ENCODE measurements at regions of chr1 and their contacts with region 1.

Region 1: GRCh38 chr1:212683357-212683722 is 16.3 kb downstream of the BATF3 start:
- DNase-seq: peak; percentile 82
- ATAC-seq: peak; percentile 37
- H3K4me3 Mint-ChIP-seq: peak overlapping the region; percentile 39
- H3K27ac Mint-ChIP-seq: peak overlapping the region; percentile 83
- H3K4me1 Mint-ChIP-seq: peaks cover 50% of the 10 kb centered on the region
- H3K27me3 Mint-ChIP-seq: no peaks in the 10 kb centered on the region

Region 2: GRCh38 chr1:212721388-212722247 is 38.3 kb after region 1 on chr1:
- CTCF ChIA-PET with region 1: interaction called, 3 read pairs
- POLR2A ChIA-PET with region 1: interaction called, 12 read pairs
- intact Hi-C with region 1: no loop called
- DNase-seq: peak; percentile 66
- ATAC-seq: peak; percentile 82
- H3K4me3 Mint-ChIP-seq: peak overlapping the region; percentile 48
- H3K27ac Mint-ChIP-seq: peak overlapping the region; percentile 68
- H3K4me1 Mint-ChIP-seq: peaks cover 48% of the 10 kb centered on the region
- H3K27me3 Mint-ChIP-seq: peaks cover 5% of the 10 kb centered on the region